ENCODE measurements at regions of chr22 and their contacts with region 1.

Region 1: DNA sequence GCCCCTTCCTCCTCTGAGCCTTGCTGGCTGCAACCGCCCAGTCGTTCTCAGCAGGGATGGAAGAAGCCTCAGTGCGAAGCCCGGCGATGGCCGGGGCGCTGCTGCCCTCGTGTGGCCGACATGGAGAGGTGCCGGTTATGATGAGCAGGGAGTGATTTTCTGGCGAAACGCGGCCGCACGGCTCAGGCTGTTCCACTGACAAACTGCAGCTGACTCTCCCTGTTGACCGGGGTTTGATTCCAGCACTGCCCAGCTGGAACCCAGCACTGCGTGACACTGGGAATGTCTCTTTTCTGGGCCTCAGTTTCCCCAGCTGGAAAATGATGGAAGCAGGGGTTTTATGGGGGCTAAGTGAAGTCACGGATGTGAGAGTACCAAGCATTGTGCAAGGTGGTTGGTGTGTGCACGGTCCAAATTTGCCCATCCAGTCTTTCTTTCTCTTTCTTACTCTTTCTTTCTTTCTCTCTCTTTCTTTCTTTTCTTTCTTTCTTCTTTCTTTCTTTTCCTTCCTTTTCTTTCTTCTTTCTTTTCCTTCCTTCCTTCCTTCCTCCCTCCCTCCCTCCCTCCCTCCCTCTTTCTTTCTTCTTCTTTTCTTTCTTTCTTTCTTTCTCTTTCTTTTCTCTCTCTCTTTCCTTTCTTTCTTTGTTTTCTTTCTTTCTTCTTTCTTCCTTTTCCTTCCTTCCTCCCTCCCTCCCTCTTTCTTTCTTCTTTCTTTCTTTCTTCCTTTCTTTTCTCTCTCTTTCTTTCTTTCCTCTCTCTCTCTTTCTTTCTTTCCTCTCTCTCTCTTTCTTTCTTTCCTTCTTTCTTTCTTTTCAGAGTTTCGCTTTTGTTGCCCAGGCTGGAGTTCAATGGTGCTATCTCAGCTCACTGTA is 25.8 kb upstream of the MPPED1 start:
- DNase-seq: peak; percentile 68 to 72
- H3K4me3 ChIP-seq: no peak overlapping the region
- H3K27ac ChIP-seq: no peak overlapping the region
- H3K4me1 ChIP-seq: no peaks in the 10 kb centered on the region
- H3K27me3 ChIP-seq: no peaks in the 10 kb centered on the region
- CTCF ChIP-seq: peak; percentile 70 to 95 (median 82)
- POLR2A ChIP-seq: no peak

Region 2: DNA sequence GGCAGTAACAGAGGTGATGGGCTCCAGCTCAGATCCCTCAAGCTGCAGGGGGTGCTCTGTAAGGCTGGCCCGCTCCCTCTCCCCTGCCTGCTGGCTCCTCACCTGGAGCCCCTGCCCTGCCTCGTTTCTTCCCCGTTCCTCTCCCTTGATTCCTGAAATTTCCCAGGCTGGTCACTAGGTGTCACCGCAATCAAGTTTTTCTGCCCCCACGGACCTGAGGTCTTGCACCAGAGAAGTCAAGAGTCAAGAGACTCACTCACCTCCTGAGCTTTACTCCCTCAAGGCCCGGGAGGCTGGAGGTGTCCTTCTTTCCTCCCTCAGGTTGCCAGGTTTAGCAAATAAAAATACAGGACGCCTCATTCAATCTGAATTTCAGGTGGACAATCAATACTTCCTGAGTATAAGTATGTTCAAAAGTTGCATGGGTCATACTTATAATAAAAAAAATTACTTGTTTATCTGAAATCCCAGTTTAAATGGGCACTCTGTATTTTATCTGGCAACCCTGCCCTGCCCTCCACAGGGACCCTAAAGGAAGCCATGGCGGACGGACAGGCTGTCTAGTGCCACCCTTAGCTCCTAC is 112.0 kb before region 1 on chr22:
- intact Hi-C with region 1: loop called (anchors 2 kb)
- DNase-seq: peak; percentile 32 to 50
- H3K4me3 ChIP-seq: no peak overlapping the region
- H3K27ac ChIP-seq: no peak overlapping the region
- H3K4me1 ChIP-seq: no peaks in the 10 kb centered on the region
- H3K27me3 ChIP-seq: no peaks in the 10 kb centered on the region
- CTCF ChIP-seq: peak in 5 of 6 experiments; percentile 30 to 88 (median 87)
- POLR2A ChIP-seq: no peak

Region 3: DNA sequence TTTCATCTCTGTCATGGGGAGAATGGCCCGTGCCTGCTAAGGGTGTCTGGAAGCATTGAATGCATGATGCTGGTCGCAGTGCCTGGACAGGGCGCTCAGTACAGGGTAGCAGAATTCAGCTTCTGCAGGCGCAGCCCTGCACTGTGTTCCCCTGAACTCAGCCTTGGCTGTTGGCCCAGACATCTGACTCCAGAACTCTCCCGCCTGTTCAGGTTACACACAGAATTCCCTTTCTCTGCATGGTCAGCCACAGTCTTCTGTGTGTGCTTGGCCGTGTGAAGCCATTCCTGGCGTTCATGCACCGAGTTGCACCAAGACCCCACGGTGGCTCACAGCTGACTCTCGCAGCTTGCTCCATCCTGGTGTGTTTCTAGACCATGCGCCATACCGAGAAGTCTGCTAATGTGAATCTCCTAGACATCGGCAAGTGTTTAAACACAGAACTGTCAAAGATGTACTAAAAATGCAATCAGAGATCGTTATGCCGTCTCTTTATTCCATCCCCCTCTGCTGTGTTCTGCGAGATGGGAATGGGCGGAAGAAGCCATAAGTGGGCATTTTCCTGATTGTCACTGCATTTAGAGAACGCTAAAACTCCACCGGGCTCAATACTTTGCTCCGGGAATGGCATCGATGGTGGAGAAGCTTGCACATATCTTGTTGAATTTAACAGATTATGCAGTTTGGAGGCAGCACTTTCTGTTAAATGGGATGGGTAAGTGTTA is 81.4 kb after region 1 on chr22:
- intact Hi-C with region 1: no loop called
- DNase-seq: peak; percentile 46 to 54
- H3K4me3 ChIP-seq: no peak overlapping the region
- H3K27ac ChIP-seq: no peak overlapping the region
- H3K4me1 ChIP-seq: no peaks in the 10 kb centered on the region
- H3K27me3 ChIP-seq: no peaks in the 10 kb centered on the region
- CTCF ChIP-seq: no peak
- POLR2A ChIP-seq: no peak